Calu3 (cell line): ENCODE measurements at regions of chr13 and their contacts with region 1.

Region 1: DNA sequence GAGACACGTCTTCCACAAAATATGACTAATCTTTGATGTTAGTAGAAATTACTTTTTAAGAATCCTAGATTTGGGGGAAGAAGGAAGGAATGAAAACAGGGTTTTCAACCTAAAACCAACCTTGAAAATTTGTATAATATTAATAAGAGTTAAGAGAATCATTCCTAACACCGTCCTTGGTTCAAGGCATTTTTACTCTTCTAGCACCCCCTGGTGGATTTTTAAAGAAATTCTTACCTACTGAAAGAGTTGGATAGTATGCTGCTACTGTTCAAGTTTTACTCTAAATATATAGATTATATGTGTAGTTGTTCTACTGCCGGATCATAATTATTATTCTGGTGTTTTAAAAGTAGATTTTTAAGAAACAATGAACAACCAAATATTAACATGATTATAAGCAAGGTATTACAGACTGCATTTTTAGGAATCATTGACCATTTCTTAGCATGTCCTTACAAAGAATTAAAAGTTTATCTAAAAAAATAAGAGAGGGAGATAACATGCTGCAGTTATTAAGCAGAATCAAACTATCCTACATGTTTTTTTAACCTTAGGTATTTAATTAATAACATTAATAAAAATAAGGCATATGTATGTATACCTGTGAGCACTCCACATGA is 7.4 kb upstream of the SLITRK6 start:
- DNase-seq: no peak
- H3K4me3 Mint-ChIP-seq: no peak overlapping the region
- H3K27ac Mint-ChIP-seq: no peak overlapping the region
- H3K4me1 Mint-ChIP-seq: no peaks in the 10 kb centered on the region
- H3K27me3 Mint-ChIP-seq: no peaks in the 10 kb centered on the region
- CTCF ChIP-seq: no peak

Region 2: GRCh38 chr13:84844473-84844872 is 962.2 kb before region 1 on chr13:
- CTCF ChIA-PET with region 1: interaction called, 3 read pairs
- intact Hi-C with region 1: loop called (anchors 5 kb)
- DNase-seq: peak; percentile 4
- H3K4me3 Mint-ChIP-seq: no peak overlapping the region
- H3K27ac Mint-ChIP-seq: no peak overlapping the region
- H3K4me1 Mint-ChIP-seq: no peaks in the 10 kb centered on the region
- H3K27me3 Mint-ChIP-seq: no peaks in the 10 kb centered on the region
- CTCF ChIP-seq: no peak

Region 3: GRCh38 chr13:84896128-84896527 is 910.5 kb before region 1 on chr13:
- CTCF ChIA-PET with region 1: no interaction called
- intact Hi-C with region 1: loop called (anchors 2 kb)
- DNase-seq: peak; percentile 6
- H3K4me3 Mint-ChIP-seq: no peak overlapping the region
- H3K27ac Mint-ChIP-seq: no peak overlapping the region
- H3K4me1 Mint-ChIP-seq: no peaks in the 10 kb centered on the region
- H3K27me3 Mint-ChIP-seq: no peaks in the 10 kb centered on the region
- CTCF ChIP-seq: no peak

Region 4: GRCh38 chr13:84917252-84917878 is 889.3 kb before region 1 on chr13:
- CTCF ChIA-PET with region 1: no interaction called
- intact Hi-C with region 1: loop called (anchors 1 kb)
- DNase-seq: no peak
- H3K4me3 Mint-ChIP-seq: no peak overlapping the region
- H3K27ac Mint-ChIP-seq: no peak overlapping the region
- H3K4me1 Mint-ChIP-seq: no peaks in the 10 kb centered on the region
- H3K27me3 Mint-ChIP-seq: no peaks in the 10 kb centered on the region
- CTCF ChIP-seq: no peak